ENCODE measurements at regions of chr4 and their contacts with region 1.

Region 1: DNA sequence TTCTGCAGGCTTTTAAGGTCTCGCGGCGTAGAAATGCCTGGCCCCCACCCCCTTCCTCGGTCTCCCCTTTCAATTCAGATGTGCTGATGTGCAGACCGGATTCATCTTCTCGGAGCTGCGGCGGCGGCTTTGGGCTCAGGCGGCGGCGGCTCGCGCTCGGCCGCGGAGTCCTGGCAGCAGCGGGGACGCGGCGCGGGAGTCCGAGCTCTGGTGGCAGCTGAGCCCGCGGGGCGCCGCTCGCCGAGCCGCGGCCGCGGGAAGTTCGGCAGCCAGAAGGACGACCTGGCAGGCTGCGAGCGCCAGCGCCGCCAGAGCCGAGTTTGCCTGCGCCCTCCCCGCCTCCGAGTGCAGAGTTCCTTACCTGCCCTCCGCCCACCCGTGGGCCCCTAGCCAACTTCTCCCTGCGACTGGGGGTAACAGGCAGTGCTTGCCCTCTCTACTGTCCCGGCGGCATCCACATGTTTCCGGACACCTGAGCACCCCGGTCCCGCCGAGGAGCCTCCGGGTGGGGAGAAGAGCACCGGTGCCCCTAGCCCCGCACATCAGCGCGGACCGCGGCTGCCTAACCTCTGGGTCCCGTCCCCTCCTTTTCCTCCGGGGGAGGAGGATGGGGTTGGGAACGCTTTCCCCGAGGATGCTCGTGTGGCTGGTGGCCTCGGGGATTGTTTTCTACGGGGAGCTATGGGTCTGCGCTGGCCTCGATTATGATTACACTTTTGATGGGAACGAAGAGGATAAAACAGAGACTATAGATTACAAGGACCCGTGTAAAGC is 448 bp downstream of the TLL1 start:
- DNase-seq: peak in 1 of 2 experiments; percentile 40
- H3K4me3 ChIP-seq: peak overlapping the region; percentile 78
- H3K27ac ChIP-seq: no peak overlapping the region
- H3K4me1 ChIP-seq: peaks cover 8% of the 10 kb centered on the region
- H3K27me3 ChIP-seq: no peaks in the 10 kb centered on the region
- CTCF ChIP-seq: no peak

Region 2: DNA sequence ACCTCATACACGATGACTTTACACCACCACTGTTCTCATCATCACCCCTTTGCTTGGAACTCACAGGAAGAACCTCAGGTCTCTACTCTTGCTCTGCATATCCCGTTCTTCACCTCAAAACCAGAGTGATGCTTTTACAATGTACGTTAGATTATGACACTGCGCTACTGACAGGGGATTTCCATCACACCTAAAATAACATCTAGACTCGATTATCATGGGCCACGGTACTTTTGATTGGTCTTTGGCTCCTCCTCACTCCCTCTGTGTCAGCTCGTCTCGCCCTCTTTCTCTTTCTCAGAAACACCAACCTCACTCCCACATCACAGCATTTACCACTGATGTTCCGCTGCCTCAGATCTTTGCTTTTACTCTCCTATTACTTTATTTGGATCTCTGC is 172.0 kb after region 1 on chr4:
- CTCF ChIA-PET with region 1: no interaction called
- POLR2A ChIA-PET with region 1: no interaction called
- intact Hi-C with region 1: no loop called
- DNase-seq: no peak
- H3K4me3 ChIP-seq: no peak overlapping the region
- H3K27ac ChIP-seq: no peak overlapping the region
- H3K4me1 ChIP-seq: no peaks in the 10 kb centered on the region
- H3K27me3 ChIP-seq: no peaks in the 10 kb centered on the region
- CTCF ChIP-seq: no peak

Region 3: DNA sequence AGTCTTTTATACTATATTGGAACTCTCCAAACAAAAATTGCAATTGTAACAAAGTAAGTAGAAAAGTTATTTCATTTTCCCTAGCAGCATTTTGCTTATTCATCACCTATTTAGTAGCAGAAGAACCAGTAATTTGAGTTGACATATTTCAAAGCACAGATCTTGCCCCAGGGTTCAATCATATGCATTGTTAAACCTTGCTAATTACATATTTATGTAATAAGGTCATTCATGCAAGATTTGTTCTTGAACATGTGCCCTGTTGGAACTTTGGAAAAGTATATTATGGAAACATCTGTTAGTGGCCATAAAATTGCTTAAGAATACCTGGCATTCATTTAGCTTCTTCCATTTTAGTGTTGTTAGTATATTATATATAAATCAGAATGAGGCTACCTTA is 191.2 kb after region 1 on chr4:
- CTCF ChIA-PET with region 1: no interaction called
- POLR2A ChIA-PET with region 1: no interaction called
- intact Hi-C with region 1: loop called (anchors 5 kb)
- DNase-seq: peak in 1 of 2 experiments; percentile 42
- H3K4me3 ChIP-seq: no peak overlapping the region
- H3K27ac ChIP-seq: no peak overlapping the region
- H3K4me1 ChIP-seq: peaks cover 10% of the 10 kb centered on the region
- H3K27me3 ChIP-seq: no peaks in the 10 kb centered on the region
- CTCF ChIP-seq: no peak